Ascending aorta (tissue), 2 donors: ENCODE measurements at regions of chr14 and their contacts with region 1.

Region 1: GRCh38 chr14:50830932-50831725 is at the start of gene NIN:
- DNase-seq: peak in 1 of 2 donors; percentile 84
- H3K4me3 ChIP-seq: peak within 1 kb of the TSS; percentile 79 to 95
- H3K27ac ChIP-seq: peak within 1 kb of the TSS; percentile 87 to 92
- H3K4me1 ChIP-seq: peaks cover 0 to 12% of the 10 kb centered on the region in 2 donors
- H3K27me3 ChIP-seq: no peaks in the 10 kb centered on the region
- CTCF ChIP-seq: no peak
- total RNA-seq, gene NIN: 25.2 TPM

Region 2: GRCh38 chr14:50542941-50543418 is 288.1 kb before region 1 on chr14:
- intact Hi-C with region 1: no loop called
- DNase-seq: no peak
- H3K4me3 ChIP-seq: no peak overlapping the region
- H3K27ac ChIP-seq: no peak overlapping the region
- H3K4me1 ChIP-seq: no peaks in the 10 kb centered on the region
- H3K27me3 ChIP-seq: no peaks in the 10 kb centered on the region
- CTCF ChIP-seq: peak; percentile 41 to 61 (median 51)

Region 3: GRCh38 chr14:50804181-50804721 is 26.9 kb before region 1 on chr14:
- intact Hi-C with region 1: loop called (anchors 2 kb)
- DNase-seq: peak in 1 of 2 donors; percentile 64
- H3K4me3 ChIP-seq: no peak overlapping the region
- H3K27ac ChIP-seq: peak overlapping the region; percentile 68 to 72
- H3K4me1 ChIP-seq: peaks cover 0 to 6% of the 10 kb centered on the region in 2 donors
- H3K27me3 ChIP-seq: no peaks in the 10 kb centered on the region
- CTCF ChIP-seq: no peak

Region 4: GRCh38 chr14:50860478-50861086 is 29.5 kb after region 1 on chr14:
- intact Hi-C with region 1: loop called (anchors 2 kb)
- DNase-seq: peak; percentile 51 to 92
- H3K4me3 ChIP-seq: peak overlapping the region; percentile 58 to 67
- H3K27ac ChIP-seq: peak overlapping the region; percentile 33 to 38
- H3K4me1 ChIP-seq: peaks cover 0 to 3% of the 10 kb centered on the region in 2 donors
- H3K27me3 ChIP-seq: no peaks in the 10 kb centered on the region
- CTCF ChIP-seq: peak; percentile 32 to 86 (median 73)